Heart left ventricle (tissue), 16 donors: ENCODE measurements at regions of chr16 and their contacts with region 1.

Region 1: DNA sequence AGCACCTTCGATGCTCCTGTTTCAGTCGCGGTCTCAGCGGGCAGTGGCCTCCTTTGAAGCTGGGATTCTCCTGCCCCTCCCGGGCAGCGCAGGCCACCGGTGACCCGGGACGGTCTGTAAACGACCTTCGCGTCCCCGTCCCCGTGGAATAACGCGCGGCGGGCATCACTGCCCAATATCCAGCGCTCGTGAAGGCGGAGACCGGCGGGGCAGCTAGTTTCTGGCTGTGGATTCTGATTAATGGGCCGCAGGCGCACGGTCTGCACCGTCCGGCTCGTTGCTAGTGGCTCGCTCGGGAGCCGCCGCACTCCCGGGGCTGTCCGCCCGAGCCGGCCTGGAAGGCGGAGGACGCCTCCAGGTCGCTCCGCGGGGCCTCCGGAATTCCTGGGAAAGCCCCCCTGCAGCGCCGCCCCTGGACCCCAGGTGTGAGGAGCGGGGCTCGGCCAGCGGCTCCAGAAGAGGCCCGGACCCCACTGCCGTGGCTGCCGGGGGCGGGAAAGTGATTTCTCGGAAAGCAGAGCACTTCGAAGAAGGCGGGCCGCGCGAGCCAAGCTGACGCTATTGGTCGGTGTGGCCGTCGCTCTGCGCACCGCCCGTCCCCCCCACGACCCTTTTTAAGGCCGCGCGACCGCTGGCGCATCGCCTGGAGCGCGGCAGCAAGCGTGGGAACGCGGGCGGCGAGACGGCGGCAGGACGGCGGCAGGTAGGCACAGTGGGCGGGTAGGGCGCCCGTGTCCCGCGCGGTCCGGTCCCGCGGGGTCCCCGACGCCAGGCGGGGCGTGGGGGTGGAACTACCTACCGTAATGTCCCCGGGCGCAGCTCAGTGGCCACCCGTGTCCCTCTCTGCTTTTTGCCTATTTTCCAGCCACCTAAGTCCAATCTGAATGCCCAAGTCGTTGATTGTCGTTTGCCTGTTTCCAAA is at the start of gene IRF8:
- DNase-seq: peak; percentile 75 to 91 (median 80)
- ATAC-seq: peak in 3 of 4 donors; percentile 79 to 94 (median 90)
- H3K4me3 ChIP-seq: peak within 1 kb of the TSS; percentile 36 to 84 (median 64)
- H3K27ac ChIP-seq: peak within 1 kb of the TSS in 8 of 12 donors; percentile 7 to 89 (median 42)
- H3K4me1 ChIP-seq: peaks cover 0 to 59% (median 13%) of the 10 kb centered on the region in 12 donors
- H3K27me3 ChIP-seq: peaks cover 0 to 73% (median 16%) of the 10 kb centered on the region in 9 donors
- CTCF ChIP-seq: no peak
- POLR2A ChIP-seq: peak in 1 of 2 donors; percentile 59
- total RNA-seq, gene IRF8: 1.8 to 31.8 (median 3.8) TPM

Region 2: GRCh38 chr16:85384840-85385462 is 513.8 kb before region 1 on chr16:
- intact Hi-C with region 1: no loop called
- DNase-seq: peak in 3 of 5 donors; percentile 12 to 29 (median 14)
- ATAC-seq: no peak
- H3K4me3 ChIP-seq: no peak overlapping the region
- H3K27ac ChIP-seq: no peak overlapping the region
- H3K4me1 ChIP-seq: peaks cover 0 to 21% (median 9%) of the 10 kb centered on the region in 12 donors
- H3K27me3 ChIP-seq: no peaks in the 10 kb centered on the region
- CTCF ChIP-seq: no peak
- POLR2A ChIP-seq: no peak

Region 3: DNA sequence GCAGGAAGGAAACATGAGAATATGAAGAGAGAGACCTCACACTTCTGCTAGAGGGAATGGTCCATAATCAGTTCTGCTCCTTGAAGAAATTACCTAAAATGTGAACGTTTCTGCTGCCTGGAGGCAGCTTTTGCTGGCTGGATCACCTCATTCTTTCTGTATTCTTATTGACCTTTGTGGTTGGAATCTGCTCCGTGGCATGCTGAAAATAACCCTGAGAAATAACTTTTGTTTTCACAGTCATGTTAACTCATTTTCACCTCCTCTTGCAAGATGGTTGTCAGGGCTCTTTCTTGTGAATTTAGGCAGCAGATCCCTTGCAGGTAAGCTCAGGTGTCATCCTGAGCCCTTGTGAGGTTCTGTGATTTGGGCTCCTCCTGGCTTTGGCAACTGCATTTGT is 70.4 kb after region 1 on chr16:
- intact Hi-C with region 1: loop called in 1 of 10 experiments (anchors 5 kb)
- DNase-seq: no peak
- ATAC-seq: no peak
- H3K4me3 ChIP-seq: no peak overlapping the region
- H3K27ac ChIP-seq: no peak overlapping the region
- H3K4me1 ChIP-seq: peaks cover 0 to 6% (median under 1%) of the 10 kb centered on the region in 12 donors
- H3K27me3 ChIP-seq: peaks cover 0 to 10% (median 0%) of the 10 kb centered on the region in 9 donors
- CTCF ChIP-seq: no peak
- POLR2A ChIP-seq: no peak

Region 4: GRCh38 chr16:85986931-85987749 is 88.4 kb after region 1 on chr16:
- intact Hi-C with region 1: loop called in 1 of 10 experiments (anchors 10 kb)
- DNase-seq: no peak
- ATAC-seq: peak in 3 of 4 donors; percentile 5 to 30 (median 15)
- H3K4me3 ChIP-seq: peak overlapping the region in 5 of 12 donors; percentile 5 to 28 (median 18)
- H3K27ac ChIP-seq: no peak overlapping the region
- H3K4me1 ChIP-seq: peaks cover 0 to 46% (median 0%) of the 10 kb centered on the region in 12 donors
- H3K27me3 ChIP-seq: peaks cover 0 to 59% (median 15%) of the 10 kb centered on the region in 9 donors
- CTCF ChIP-seq: peak in 11 of 12 donors; percentile 25 to 66 (median 42)
- POLR2A ChIP-seq: no peak